ENCODE measurements at regions of chr6 and their contacts with region 1.

Region 1: GRCh38 chr6:116100419-116101301 is at the start of gene NT5DC1:
- DNase-seq: peak; percentile 81 to 86 (median 84)
- H3K4me3 ChIP-seq: peak within 1 kb of the TSS; percentile 66 to 71
- H3K4me3 Mint-ChIP-seq: peak within 1 kb of the TSS; percentile 94 to 99 (median 98)
- H3K27ac ChIP-seq: peak within 1 kb of the TSS; percentile 86
- H3K27ac Mint-ChIP-seq: peak within 1 kb of the TSS; percentile 89 to 97 (median 93)
- H3K4me1 ChIP-seq: peaks cover 49% of the 10 kb centered on the region
- H3K4me1 Mint-ChIP-seq: peaks cover 44 to 57% (median 48%) of the 10 kb centered on the region in 4 donors
- H3K27me3 ChIP-seq: no peaks in the 10 kb centered on the region
- H3K27me3 Mint-ChIP-seq: no peaks in the 10 kb centered on the region
- total RNA-seq, gene NT5DC1: 50.5 to 51.9 TPM

Region 2: GRCh38 chr6:116010790-116011401 is 89.8 kb before region 1 on chr6:
- CTCF ChIA-PET with region 1: interaction called, 46 read pairs
- POLR2A ChIA-PET with region 1: interaction called, 3 read pairs
- intact Hi-C with region 1: loop called (anchors 1 kb)
- DNase-seq: peak; percentile 20 to 42 (median 36)
- H3K4me3 ChIP-seq: no peak overlapping the region
- H3K4me3 Mint-ChIP-seq: no peak overlapping the region
- H3K27ac ChIP-seq: no peak overlapping the region
- H3K27ac Mint-ChIP-seq: no peak overlapping the region
- H3K4me1 ChIP-seq: no peaks in the 10 kb centered on the region
- H3K4me1 Mint-ChIP-seq: peaks cover 0 to 6% (median under 1%) of the 10 kb centered on the region in 4 donors
- H3K27me3 ChIP-seq: no peaks in the 10 kb centered on the region
- H3K27me3 Mint-ChIP-seq: peaks cover 2 to 19% of the 10 kb centered on the region in 2 donors

Region 3: GRCh38 chr6:116087437-116088027 is 13.1 kb before region 1 on chr6:
- CTCF ChIA-PET with region 1: interaction called, 17 read pairs
- POLR2A ChIA-PET with region 1: no interaction called
- intact Hi-C with region 1: no loop called
- DNase-seq: no peak
- H3K4me3 ChIP-seq: no peak overlapping the region
- H3K4me3 Mint-ChIP-seq: no peak overlapping the region
- H3K27ac ChIP-seq: no peak overlapping the region
- H3K27ac Mint-ChIP-seq: no peak overlapping the region
- H3K4me1 ChIP-seq: no peaks in the 10 kb centered on the region
- H3K4me1 Mint-ChIP-seq: no peaks in the 10 kb centered on the region
- H3K27me3 ChIP-seq: no peaks in the 10 kb centered on the region
- H3K27me3 Mint-ChIP-seq: peaks cover 1 to 5% of the 10 kb centered on the region in 2 donors

Region 4: DNA sequence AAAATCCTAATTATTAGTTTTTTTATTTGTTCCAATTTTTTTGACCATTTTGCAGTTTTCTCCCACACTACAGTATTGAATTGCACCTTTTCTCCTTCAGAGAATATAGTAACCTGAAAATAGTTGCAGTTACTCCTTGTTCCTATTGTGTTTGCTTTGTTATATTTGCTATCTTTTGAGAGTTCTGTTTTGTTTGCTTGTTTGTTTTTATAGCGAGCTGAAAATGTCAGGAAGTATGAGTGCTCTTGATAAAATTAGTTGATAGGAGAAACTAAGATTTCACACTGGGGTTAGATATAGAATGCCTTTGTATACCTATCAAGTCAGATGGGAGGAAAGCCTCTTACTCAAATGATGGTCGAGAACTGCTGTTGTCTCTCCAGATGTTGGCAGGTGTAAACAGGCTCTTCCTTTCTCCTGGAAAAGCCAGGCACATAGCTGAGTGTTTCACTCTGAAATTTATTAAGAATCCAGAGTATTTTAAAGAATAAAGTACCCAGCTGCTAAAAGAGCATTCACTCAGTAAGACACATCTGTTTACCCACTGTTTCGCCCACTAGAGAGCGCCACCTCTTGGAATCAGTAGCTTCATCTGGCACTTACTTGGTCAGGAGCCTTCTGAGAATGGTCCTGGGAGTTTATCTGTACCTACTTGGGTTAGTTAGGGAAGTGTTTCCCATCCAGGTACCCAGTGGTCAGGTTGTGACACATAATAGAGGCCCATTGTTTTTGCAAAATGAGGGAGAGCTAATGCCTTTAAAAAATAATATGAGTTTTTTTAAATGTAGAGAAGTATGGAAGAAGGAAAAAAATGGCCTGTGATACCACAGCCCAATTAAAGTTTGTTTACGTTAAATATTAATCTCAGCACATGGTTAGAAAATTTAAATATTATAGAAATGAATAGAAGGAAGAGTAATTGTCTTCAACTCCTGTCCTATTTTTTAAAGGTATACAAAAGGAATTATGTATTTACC is 11.2 kb after region 1 on chr6:
- CTCF ChIA-PET with region 1: interaction called, 11 read pairs
- POLR2A ChIA-PET with region 1: interaction called, 5 read pairs
- intact Hi-C with region 1: no loop called
- DNase-seq: no peak
- H3K4me3 ChIP-seq: no peak overlapping the region
- H3K4me3 Mint-ChIP-seq: no peak overlapping the region
- H3K27ac ChIP-seq: no peak overlapping the region
- H3K27ac Mint-ChIP-seq: peak overlapping the region in 2 of 7 donors; percentile 16 to 38
- H3K4me1 ChIP-seq: no peaks in the 10 kb centered on the region
- H3K4me1 Mint-ChIP-seq: peaks cover 0 to 11% (median 5%) of the 10 kb centered on the region in 4 donors
- H3K27me3 ChIP-seq: no peaks in the 10 kb centered on the region
- H3K27me3 Mint-ChIP-seq: no peaks in the 10 kb centered on the region

Region 5: GRCh38 chr6:116253505-116254296 is 153.0 kb after region 1 on chr6 and contains the start of gene TSPYL4:
- CTCF ChIA-PET with region 1: no interaction called
- POLR2A ChIA-PET with region 1: interaction called, 10 read pairs
- intact Hi-C with region 1: loop called (anchors 10 kb)
- DNase-seq: peak; percentile 91 to 96 (median 93)
- H3K4me3 ChIP-seq: peak within 1 kb of the TSS; percentile 66 to 96
- H3K4me3 Mint-ChIP-seq: no peak within 1 kb of the TSS
- H3K27ac ChIP-seq: peak within 1 kb of the TSS; percentile 97
- H3K27ac Mint-ChIP-seq: peak within 1 kb of the TSS in 1 of 7 donors; percentile 69
- H3K4me1 ChIP-seq: peaks cover 45% of the 10 kb centered on the region
- H3K4me1 Mint-ChIP-seq: peaks cover 3 to 32% (median 18%) of the 10 kb centered on the region in 4 donors
- H3K27me3 ChIP-seq: no peaks in the 10 kb centered on the region
- H3K27me3 Mint-ChIP-seq: no peaks in the 10 kb centered on the region
- total RNA-seq, gene TSPYL4: 22.3 to 23.0 TPM

Region 6: GRCh38 chr6:116680975-116681808 is 580.5 kb after region 1 on chr6 and contains the start of gene KPNA5:
- CTCF ChIA-PET with region 1: no interaction called
- POLR2A ChIA-PET with region 1: interaction called, 6 read pairs
- intact Hi-C with region 1: loop called (anchors 1 kb)
- DNase-seq: peak; percentile 83 to 93 (median 88)
- H3K4me3 ChIP-seq: peak within 1 kb of the TSS; percentile 75 to 95
- H3K4me3 Mint-ChIP-seq: peak within 1 kb of the TSS; percentile 96 to 99 (median 98)
- H3K27ac ChIP-seq: peak within 1 kb of the TSS; percentile 84
- H3K27ac Mint-ChIP-seq: peak within 1 kb of the TSS; percentile 95 to 99 (median 99)
- H3K4me1 ChIP-seq: peaks cover 34% of the 10 kb centered on the region
- H3K4me1 Mint-ChIP-seq: peaks cover 33 to 61% (median 46%) of the 10 kb centered on the region in 4 donors
- H3K27me3 ChIP-seq: no peaks in the 10 kb centered on the region
- H3K27me3 Mint-ChIP-seq: no peaks in the 10 kb centered on the region
- total RNA-seq, gene KPNA5: 60.7 to 61.8 TPM

Measured in CD4-positive, alpha-beta memory T cell (primary cell).